Ovary (tissue), 10 donors: ENCODE measurements at regions of chr5 and their contacts with region 1.

Region 1: DNA sequence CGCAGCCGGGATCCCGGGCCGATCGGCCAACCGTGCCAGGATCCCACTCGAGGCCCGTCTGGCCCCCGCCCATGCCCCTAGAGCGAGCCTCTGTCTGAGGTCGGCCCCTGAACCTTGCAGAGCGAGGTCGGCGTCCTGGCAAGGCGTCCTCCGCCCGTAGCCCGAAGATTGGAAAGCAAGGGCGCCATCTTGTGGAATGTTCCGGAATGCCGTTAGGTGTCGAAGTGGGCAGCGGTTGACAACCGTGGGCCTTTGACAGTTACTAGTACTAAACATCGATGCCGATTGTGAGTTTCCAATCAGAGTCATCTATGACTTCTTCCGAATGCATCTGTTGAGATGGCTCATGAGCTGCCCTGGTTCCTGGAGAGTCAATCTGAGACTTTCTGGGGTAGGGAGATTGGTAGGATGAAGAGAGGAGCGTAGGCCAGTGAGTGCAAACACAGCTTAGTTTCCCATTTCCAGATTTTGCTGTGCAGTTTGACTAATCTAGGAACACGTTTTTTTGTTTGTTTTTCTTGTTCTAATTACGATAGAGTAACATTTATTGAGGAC is 923 bp upstream of the PLK2 start:
- DNase-seq: peak; percentile 87 to 94 (median 93)
- H3K4me3 ChIP-seq: peak overlapping the region; percentile 80
- H3K27ac ChIP-seq: peak overlapping the region; percentile 76 to 94
- H3K4me1 ChIP-seq: peaks cover 2% of the 10 kb centered on the region
- H3K27me3 ChIP-seq: no peaks in the 10 kb centered on the region
- CTCF ChIP-seq: peak; percentile 65 to 82 (median 79)
- EP300 ChIP-seq: no peak
- POLR2A ChIP-seq: no peak

Region 2: DNA sequence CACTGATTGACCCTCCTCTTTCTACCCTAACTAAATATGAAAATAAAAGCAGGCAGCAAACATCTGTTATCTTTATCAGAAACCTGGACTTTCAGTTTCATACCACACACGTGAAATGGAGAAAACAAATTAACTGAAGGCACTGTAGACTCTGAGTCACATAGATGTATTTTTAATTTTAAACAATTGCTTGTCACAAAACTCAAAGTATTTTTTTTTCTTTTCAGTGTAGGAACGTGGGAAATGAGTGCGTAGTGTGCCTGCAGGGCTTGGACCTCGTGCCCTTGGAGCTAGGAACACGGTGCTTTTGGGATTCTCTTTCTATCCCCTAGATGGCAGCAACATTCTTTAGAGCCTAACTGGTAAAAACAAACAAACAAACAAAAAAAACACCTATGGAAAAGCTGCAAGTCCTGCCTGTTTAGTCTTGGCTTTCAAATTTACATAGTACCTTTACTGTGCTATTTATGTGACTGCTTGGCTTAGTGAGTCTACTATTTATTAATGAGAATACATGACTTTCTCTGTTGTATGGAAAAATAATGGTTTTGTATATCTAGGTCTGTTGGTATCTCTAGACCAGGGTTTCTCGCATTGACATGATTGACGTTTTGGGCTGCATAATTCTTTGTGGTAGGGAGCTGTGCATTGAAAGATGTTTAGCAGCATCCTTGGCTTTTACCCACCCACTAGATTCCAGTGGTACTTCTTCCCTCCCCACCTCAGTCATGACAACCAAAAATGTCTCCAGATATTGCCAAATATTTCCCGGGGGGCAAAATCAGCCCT is 961.4 kb before region 1 on chr5:
- intact Hi-C with region 1: loop called in 2 of 4 experiments (anchors 5 kb)
- DNase-seq: no peak
- H3K4me3 ChIP-seq: no peak overlapping the region
- H3K27ac ChIP-seq: no peak overlapping the region
- H3K4me1 ChIP-seq: peaks cover 7% of the 10 kb centered on the region
- H3K27me3 ChIP-seq: no peaks in the 10 kb centered on the region
- CTCF ChIP-seq: peak in 2 of 3 donors; percentile 24 to 46
- EP300 ChIP-seq: no peak
- POLR2A ChIP-seq: no peak

Region 3: GRCh38 chr5:57779383-57780223 is 681.2 kb before region 1 on chr5:
- intact Hi-C with region 1: loop called in 3 of 4 experiments (anchors 2 to 5 kb)
- DNase-seq: peak in 4 of 5 donors; percentile 13 to 31 (median 22)
- H3K4me3 ChIP-seq: no peak overlapping the region
- H3K27ac ChIP-seq: no peak overlapping the region
- H3K4me1 ChIP-seq: peaks cover 3% of the 10 kb centered on the region
- H3K27me3 ChIP-seq: no peaks in the 10 kb centered on the region
- CTCF ChIP-seq: peak in 1 of 3 donors; percentile 55
- EP300 ChIP-seq: no peak
- POLR2A ChIP-seq: no peak

Region 4: GRCh38 chr5:58629271-58630159 is 168.7 kb after region 1 on chr5:
- intact Hi-C with region 1: no loop called
- DNase-seq: no peak
- H3K4me3 ChIP-seq: no peak overlapping the region
- H3K27ac ChIP-seq: no peak overlapping the region
- H3K4me1 ChIP-seq: no peaks in the 10 kb centered on the region
- H3K27me3 ChIP-seq: no peaks in the 10 kb centered on the region
- CTCF ChIP-seq: no peak
- EP300 ChIP-seq: no peak
- POLR2A ChIP-seq: no peak